ENCODE measurements at regions of chr19 and their contacts with region 1.

Region 1: GRCh38 chr19:21358768-21359451 is at the start of gene ZNF738:
- DNase-seq: peak; percentile 85 to 91
- ATAC-seq: peak; percentile 97 to 98 (median 98)
- H3K4me3 ChIP-seq: peak within 1 kb of the TSS; percentile 85
- H3K4me3 Mint-ChIP-seq: peak within 1 kb of the TSS; percentile 99
- H3K27ac ChIP-seq: peak within 1 kb of the TSS; percentile 83
- H3K27ac Mint-ChIP-seq: peak within 1 kb of the TSS; percentile 94 to 96
- H3K4me1 ChIP-seq: peaks cover 7% of the 10 kb centered on the region
- H3K4me1 Mint-ChIP-seq: peaks cover 18% of the 10 kb centered on the region in 2 donors
- H3K27me3 ChIP-seq: no peaks in the 10 kb centered on the region
- H3K27me3 Mint-ChIP-seq: no peaks in the 10 kb centered on the region
- CTCF ChIP-seq: no peak
- total RNA-seq, gene ZNF738: 11.4 to 22.9 (median 14.7) TPM

Region 2: GRCh38 chr19:21109116-21109515 is 249.8 kb before region 1 on chr19:
- intact Hi-C with region 1: no loop called
- DNase-seq: no peak
- ATAC-seq: no peak
- H3K4me3 ChIP-seq: no peak overlapping the region
- H3K4me3 Mint-ChIP-seq: no peak overlapping the region
- H3K27ac ChIP-seq: no peak overlapping the region
- H3K27ac Mint-ChIP-seq: no peak overlapping the region
- H3K4me1 ChIP-seq: no peaks in the 10 kb centered on the region
- H3K4me1 Mint-ChIP-seq: peaks cover 0 to 14% of the 10 kb centered on the region in 2 donors
- H3K27me3 ChIP-seq: no peaks in the 10 kb centered on the region
- H3K27me3 Mint-ChIP-seq: no peaks in the 10 kb centered on the region
- CTCF ChIP-seq: no peak

Region 3: GRCh38 chr19:21328885-21329605 is 29.9 kb before region 1 on chr19 and contains the start of gene ZNF708:
- intact Hi-C with region 1: loop called (anchors 1 kb)
- DNase-seq: peak; percentile 73 to 86
- ATAC-seq: peak; percentile 97 to 100 (median 98)
- H3K4me3 ChIP-seq: peak within 1 kb of the TSS; percentile 96
- H3K4me3 Mint-ChIP-seq: peak within 1 kb of the TSS; percentile 97
- H3K27ac ChIP-seq: peak within 1 kb of the TSS; percentile 97
- H3K27ac Mint-ChIP-seq: peak within 1 kb of the TSS; percentile 98
- H3K4me1 ChIP-seq: peaks cover 15% of the 10 kb centered on the region
- H3K4me1 Mint-ChIP-seq: peaks cover 34 to 38% of the 10 kb centered on the region in 2 donors
- H3K27me3 ChIP-seq: no peaks in the 10 kb centered on the region
- H3K27me3 Mint-ChIP-seq: no peaks in the 10 kb centered on the region
- CTCF ChIP-seq: no peak
- total RNA-seq, gene ZNF708: 21.2 to 24.4 (median 24.4) TPM

Measured in natural killer cell (primary cell).